ENCODE measurements at regions of chr16 and their contacts with region 1.

Region 1: DNA sequence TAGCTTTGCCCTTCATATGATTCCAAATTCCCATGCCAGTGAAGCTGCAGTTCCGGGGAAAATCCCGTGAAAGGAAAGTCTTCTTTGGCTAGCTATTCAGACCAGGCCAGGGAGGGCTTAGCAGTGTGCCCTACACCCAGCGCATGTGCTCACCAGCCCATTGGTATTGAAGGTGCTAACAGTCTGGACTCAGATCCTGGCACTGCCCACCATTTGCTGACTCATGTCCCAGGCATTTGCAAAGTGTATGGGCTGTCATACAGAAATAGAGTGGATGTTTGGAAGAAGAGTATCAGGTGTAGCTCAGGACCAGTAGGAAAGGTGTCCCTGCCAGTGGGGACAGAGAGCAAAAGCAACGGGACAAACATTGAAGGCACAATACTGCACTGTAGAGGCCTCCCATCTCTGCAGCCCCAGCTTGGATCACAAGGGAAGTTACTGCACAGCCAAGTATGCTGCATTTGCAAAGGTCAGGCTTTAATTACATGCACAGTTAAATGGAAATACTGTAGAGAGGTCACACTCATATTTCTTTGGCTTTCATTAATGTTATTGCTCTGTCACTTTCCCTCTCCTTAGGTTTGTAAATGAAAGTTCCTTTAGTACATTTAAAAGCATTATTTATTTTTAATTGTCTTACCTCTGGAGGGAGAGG is 220.0 kb downstream of the IRX3 start:
- DNase-seq: peak; percentile 79
- H3K4me3 Mint-ChIP-seq: no peak overlapping the region
- H3K27ac Mint-ChIP-seq: no peak overlapping the region
- H3K4me1 Mint-ChIP-seq: peaks cover 25% of the 10 kb centered on the region
- H3K27me3 Mint-ChIP-seq: no peaks in the 10 kb centered on the region
- CTCF ChIP-seq: no peak

Region 2: GRCh38 chr16:53952215-53953208 is 114.1 kb before region 1 on chr16:
- CTCF ChIA-PET with region 1: no interaction called
- POLR2A ChIA-PET with region 1: no interaction called
- intact Hi-C with region 1: no loop called
- DNase-seq: peak; percentile 51
- H3K4me3 Mint-ChIP-seq: peak overlapping the region; percentile 56
- H3K27ac Mint-ChIP-seq: peak overlapping the region; percentile 66
- H3K4me1 Mint-ChIP-seq: peaks cover 9% of the 10 kb centered on the region
- H3K27me3 Mint-ChIP-seq: no peaks in the 10 kb centered on the region
- CTCF ChIP-seq: no peak

Region 3: GRCh38 chr16:54080524-54081008 is 14.0 kb after region 1 on chr16:
- CTCF ChIA-PET with region 1: interaction called, 5 read pairs
- POLR2A ChIA-PET with region 1: interaction called, 29 read pairs
- intact Hi-C with region 1: no loop called
- DNase-seq: peak; percentile 99
- H3K4me3 Mint-ChIP-seq: peak overlapping the region; percentile 54
- H3K27ac Mint-ChIP-seq: peak overlapping the region; percentile 99
- H3K4me1 Mint-ChIP-seq: peaks cover 41% of the 10 kb centered on the region
- H3K27me3 Mint-ChIP-seq: no peaks in the 10 kb centered on the region
- CTCF ChIP-seq: no peak

Measured in MCF 10A (cell line).